ENCODE measurements at regions of chr13 and their contacts with region 1.

Region 1: GRCh38 chr13:98318263-98318878 is 141.3 kb upstream of the RNF113B start:
- DNase-seq: no peak
- H3K4me3 ChIP-seq: no peak overlapping the region
- H3K27ac ChIP-seq: no peak overlapping the region
- H3K4me1 ChIP-seq: peaks cover 21% of the 10 kb centered on the region
- H3K27me3 ChIP-seq: no peaks in the 10 kb centered on the region
- CTCF ChIP-seq: no peak

Region 2: DNA sequence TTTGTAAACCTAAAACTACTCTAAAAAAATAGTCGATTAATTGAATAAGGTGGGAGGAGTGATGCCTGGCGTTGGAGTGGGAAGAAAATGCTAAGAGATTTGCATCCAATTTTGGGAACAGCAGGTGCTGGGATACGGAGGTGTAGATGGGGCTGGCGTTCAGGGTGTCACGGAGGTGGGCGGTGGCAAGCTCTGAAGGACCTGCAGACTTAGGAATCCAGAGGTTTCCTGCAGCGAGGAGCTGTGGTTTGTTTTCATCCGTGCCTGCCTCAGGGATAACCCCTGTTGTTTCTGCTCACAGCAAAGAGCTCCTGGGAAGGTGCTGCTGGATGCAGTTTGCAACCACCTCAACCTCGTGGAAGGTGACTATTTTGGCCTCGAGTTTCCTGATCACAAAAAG is 25.1 kb after region 1 on chr13:
- CTCF ChIA-PET with region 1: no interaction called
- POLR2A ChIA-PET with region 1: interaction called, 10 read pairs
- intact Hi-C with region 1: no loop called
- DNase-seq: no peak
- H3K4me3 ChIP-seq: no peak overlapping the region
- H3K27ac ChIP-seq: no peak overlapping the region
- H3K4me1 ChIP-seq: peaks cover 6% of the 10 kb centered on the region
- H3K27me3 ChIP-seq: no peaks in the 10 kb centered on the region
- CTCF ChIP-seq: no peak

Region 3: DNA sequence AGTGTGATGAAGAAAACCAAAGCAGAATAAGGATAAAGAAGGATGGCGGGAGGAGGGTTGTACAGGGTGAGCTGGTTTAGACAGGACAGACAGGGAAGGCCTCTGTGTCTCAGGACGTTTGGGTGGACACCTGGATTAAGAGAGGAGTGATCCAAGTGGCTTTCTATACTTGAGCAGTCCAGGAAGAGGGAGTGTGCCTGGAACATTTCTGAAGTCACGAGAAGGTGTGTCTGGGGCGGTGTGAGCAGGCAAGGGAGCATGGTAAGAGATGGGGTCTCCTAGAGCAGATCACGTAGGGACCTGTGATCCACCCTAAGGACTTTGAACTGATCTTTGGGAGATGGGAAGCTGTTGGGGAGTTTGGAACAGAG is 274.0 kb after region 1 on chr13:
- CTCF ChIA-PET with region 1: no interaction called
- POLR2A ChIA-PET with region 1: no interaction called
- intact Hi-C with region 1: no loop called
- DNase-seq: no peak
- H3K4me3 ChIP-seq: no peak overlapping the region
- H3K27ac ChIP-seq: no peak overlapping the region
- H3K4me1 ChIP-seq: peaks cover 4% of the 10 kb centered on the region
- H3K27me3 ChIP-seq: no peaks in the 10 kb centered on the region
- CTCF ChIP-seq: no peak

Region 4: DNA sequence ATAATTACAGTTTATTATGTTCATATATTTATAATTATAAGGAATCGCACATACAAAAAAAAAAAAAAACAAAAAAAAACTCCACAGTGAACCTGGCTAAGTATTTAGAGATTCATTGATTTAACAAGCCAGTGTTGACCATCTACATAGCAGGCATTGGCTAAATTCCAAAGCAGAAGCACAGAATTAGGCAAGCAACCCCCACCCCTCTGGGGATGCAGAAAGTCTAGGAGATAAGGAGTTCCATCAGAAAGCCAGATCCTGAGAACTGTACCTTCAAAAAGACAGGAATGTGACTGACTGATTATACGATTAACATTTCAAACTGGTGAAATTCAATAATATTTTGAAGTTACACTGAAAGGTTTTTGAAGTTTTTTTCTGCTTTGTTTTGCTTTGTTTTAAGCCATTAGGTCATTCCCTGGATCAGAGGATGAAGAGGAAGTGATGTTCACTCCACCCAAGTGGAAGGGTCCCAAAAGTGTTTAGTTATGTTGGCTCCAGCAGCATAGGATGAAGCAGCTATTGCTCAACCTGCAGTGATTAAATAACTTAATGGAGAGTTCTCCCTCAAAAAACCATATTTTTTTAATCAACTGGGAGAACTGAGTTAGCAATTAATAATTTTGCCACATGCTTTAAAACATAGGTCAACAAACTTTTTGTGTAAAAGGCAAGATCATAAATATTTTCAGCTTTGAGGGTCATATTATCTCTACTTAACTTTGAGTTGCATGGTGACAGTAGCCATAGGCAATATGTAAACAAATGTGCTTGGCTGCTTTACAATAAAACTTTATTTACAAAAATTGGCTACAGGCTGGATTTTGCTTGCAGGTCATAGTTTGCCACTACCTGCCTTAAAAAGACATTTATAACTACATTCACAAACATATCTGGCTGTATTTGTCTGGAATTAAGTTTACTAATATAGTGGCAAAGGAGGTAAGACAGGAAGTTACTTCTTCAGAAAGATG is 609.9 kb after region 1 on chr13:
- CTCF ChIA-PET with region 1: no interaction called
- POLR2A ChIA-PET with region 1: no interaction called
- intact Hi-C with region 1: no loop called
- DNase-seq: no peak
- H3K4me3 ChIP-seq: no peak overlapping the region
- H3K27ac ChIP-seq: no peak overlapping the region
- H3K4me1 ChIP-seq: no peaks in the 10 kb centered on the region
- H3K27me3 ChIP-seq: no peaks in the 10 kb centered on the region
- CTCF ChIP-seq: no peak

Measured in A673 (cell line).